Heart left ventricle (tissue), 16 donors: ENCODE measurements at regions of chr22 and their contacts with region 1.

Region 1: GRCh38 chr22:35489239-35489638 is 51.4 kb upstream of the RASD2 start:
- DNase-seq: no peak
- ATAC-seq: no peak
- H3K4me3 ChIP-seq: no peak overlapping the region
- H3K27ac ChIP-seq: no peak overlapping the region
- H3K4me1 ChIP-seq: no peaks in the 10 kb centered on the region
- H3K27me3 ChIP-seq: peaks cover 0 to 3% (median 0%) of the 10 kb centered on the region in 9 donors
- CTCF ChIP-seq: no peak
- POLR2A ChIP-seq: no peak

Region 2: GRCh38 chr22:35517769-35518530 is 28.7 kb after region 1 on chr22:
- intact Hi-C with region 1: loop called in 1 of 10 experiments (anchors 2 kb)
- DNase-seq: no peak
- ATAC-seq: no peak
- H3K4me3 ChIP-seq: no peak overlapping the region
- H3K27ac ChIP-seq: no peak overlapping the region
- H3K4me1 ChIP-seq: no peaks in the 10 kb centered on the region
- H3K27me3 ChIP-seq: peaks cover 0 to 27% (median 5%) of the 10 kb centered on the region in 9 donors
- CTCF ChIP-seq: no peak
- POLR2A ChIP-seq: no peak